HAP-1 (cell line): ENCODE measurements at regions of chr11 and their contacts with region 1.

Region 1: DNA sequence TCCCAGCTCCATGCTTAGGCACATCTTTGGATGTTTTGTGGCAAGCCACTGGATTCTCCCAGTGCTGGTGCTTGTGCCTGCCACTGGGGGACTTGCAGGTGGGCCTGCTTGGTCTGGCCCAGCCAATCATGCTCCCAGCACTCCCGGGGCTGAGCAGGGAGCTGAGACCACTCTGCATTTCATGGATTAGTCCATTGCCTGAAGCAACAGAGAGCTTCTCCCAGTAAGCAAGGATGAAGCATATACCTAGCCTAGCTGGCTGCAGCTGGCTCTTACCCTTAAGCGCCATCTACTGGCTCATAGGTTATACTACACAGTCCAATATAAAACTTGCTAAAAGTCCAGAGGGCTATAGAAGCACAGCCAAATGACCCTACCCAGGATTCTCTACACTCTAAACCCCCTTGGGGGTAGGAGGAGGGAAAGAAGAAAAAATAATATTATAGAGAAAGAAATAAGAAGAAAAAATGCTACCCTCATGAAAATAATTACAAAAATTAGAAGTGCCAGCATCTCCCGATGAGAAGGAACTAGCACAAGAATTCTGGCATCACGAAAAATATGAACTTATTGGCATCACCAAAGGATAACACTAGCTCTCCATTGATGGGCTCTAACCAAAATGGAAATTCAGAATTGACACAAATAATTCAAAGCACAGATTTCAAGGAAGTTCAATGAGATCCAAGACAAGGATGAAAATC is 275.3 kb downstream of the C11orf87 start:
- DNase-seq: peak; percentile 40 to 47
- H3K4me3 ChIP-seq: no peak overlapping the region
- H3K4me1 ChIP-seq: no peaks in the 10 kb centered on the region
- H3K27me3 ChIP-seq: peaks cover 2% of the 10 kb centered on the region; the same call in 1 of the 2 replicates

Region 2: DNA sequence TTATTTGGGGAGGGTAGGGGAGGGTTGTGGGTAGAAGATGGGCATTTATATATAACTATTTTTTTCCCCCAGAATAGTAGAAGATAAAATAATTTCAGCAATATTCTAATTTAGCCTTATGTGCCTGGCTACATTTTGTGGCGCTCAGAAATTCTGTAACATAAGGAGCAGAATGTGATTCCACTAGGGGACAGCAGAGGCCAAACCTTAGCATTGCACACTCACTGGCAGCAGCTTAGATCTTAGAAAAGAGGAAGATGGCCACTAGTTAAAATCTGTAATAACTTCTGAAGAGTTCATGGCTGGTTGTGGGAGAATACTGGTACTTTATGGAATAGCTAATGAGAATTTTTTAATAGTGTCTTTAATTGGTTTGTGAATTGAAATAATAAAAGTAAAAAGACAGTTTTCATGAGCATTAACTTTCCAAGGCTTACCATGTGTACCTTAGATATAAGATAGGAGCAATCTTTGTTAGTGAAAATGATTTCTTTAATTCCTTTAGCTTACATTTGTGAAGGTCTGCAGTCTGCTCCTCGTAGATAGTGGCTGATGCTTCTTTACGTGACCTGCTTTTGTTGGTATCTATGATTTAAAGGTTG is 999.3 kb before region 1 on chr11:
- in situ Hi-C with region 1: loop called (anchors 25 kb)
- DNase-seq: peak; percentile 65 to 67
- H3K4me3 ChIP-seq: no peak overlapping the region
- H3K4me1 ChIP-seq: no peaks in the 10 kb centered on the region
- H3K27me3 ChIP-seq: no peaks in the 10 kb centered on the region